ENCODE measurements at regions of chr7 and their contacts with region 1.

Region 1: GRCh38 chr7:80729591-80730320 is 91.3 kb downstream of the CD36 start:
- DNase-seq: no peak
- H3K4me3 ChIP-seq: no peak overlapping the region
- H3K27ac ChIP-seq: peak overlapping the region; percentile 22 to 68 (median 56)
- H3K4me1 ChIP-seq: peaks cover 0 to 23% (median 18%) of the 10 kb centered on the region in 4 donors
- H3K27me3 ChIP-seq: no peaks in the 10 kb centered on the region
- CTCF ChIP-seq: no peak
- EP300 ChIP-seq: no peak
- POLR2A ChIP-seq: no peak

Region 2: GRCh38 chr7:80781561-80781979 is 51.8 kb after region 1 on chr7:
- intact Hi-C with region 1: loop called (anchors 5 kb)
- DNase-seq: no peak
- H3K4me3 ChIP-seq: no peak overlapping the region
- H3K27ac ChIP-seq: peak overlapping the region; percentile 75 to 79 (median 78)
- H3K4me1 ChIP-seq: peaks cover 34 to 83% (median 73%) of the 10 kb centered on the region in 4 donors
- H3K27me3 ChIP-seq: no peaks in the 10 kb centered on the region
- CTCF ChIP-seq: no peak
- EP300 ChIP-seq: no peak
- POLR2A ChIP-seq: no peak